A549 (cell line): ENCODE measurements at regions of chr11 and their contacts with region 1.

Region 1: DNA sequence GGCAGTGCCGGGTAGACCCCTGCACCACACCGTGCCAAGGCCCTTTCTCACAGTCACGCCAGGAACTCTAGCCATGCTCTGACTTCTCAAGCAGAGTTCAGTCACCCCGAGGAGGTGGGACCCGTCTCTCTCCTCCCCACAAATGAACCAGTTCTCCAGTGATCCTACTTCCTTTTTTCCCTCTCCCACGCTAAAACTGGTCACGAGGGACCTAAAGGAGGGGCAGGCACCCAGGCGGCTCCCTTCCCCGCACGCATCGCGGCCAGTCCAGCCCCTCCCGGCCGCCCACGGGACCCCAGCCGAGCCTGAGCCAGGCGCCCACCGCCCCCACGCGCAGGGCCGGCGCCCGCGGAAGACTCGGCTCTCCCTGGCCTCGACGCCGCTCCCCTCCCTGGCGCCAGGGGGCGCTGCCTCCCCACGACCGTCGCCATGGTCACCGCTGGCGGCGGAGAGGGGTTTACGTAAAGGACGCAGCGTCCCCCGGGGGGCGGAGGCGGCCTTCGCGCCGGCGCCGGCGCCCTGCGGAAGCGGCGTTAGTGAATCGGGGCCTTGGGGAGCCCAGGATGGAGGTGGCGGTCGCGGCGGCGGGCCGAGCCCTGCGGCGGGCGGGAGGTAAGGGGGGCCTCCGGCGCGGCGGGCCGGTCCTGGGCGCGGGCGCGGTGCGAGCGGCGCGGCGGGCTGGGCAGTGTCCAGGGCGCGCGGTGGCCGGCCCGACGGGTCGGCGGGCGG is at the start of gene DAGLA:
- DNase-seq: peak; percentile 66 to 68
- ATAC-seq: peak; percentile 62 to 81
- H3K4me3 ChIP-seq: peak within 1 kb of the TSS; percentile 61
- H3K27ac ChIP-seq: peak within 1 kb of the TSS; percentile 73 to 96
- H3K4me1 ChIP-seq: peaks cover 29% of the 10 kb centered on the region
- CTCF ChIP-seq: peak; percentile 93
- EP300 ChIP-seq: no peak
- POLR2A ChIP-seq: peak; percentile 26
- RAD21 ChIP-seq: peak; percentile 71 to 75
- polyA plus RNA-seq, gene DAGLA: 0.93 and 1.2 TPM in 2 replicates

Region 2: DNA sequence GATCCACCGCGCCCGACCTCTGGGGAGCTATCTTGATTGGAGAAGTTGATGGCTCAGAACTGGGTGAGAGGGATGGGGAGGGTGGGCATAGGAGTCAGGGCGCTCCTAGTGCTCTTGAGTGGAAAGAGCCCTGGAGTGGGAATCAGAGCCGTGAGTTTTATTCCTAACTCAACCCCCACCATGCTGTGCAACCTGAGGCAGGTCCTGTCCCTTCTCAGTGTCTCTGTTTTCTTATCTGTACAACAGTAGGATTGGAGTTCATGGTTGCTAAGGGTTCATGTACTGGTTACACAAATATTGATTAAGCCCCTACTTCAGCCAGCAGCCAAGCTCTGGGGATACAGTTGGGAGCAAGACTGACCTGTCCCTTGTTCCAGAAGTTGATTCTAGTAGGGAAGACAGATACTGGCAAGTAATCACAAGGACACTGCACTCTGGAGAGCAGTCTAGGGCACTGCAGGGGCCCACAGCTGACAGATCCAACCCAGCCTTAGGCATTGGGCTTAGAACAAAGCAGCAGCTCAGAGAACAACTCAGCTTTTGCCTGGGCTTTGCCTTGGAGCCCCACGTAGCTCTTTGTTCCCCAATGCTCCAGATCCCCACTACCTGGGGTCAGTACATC is 12.3 kb before region 1 on chr11:
- CTCF ChIA-PET with region 1: interaction called, 11 read pairs
- POLR2A ChIA-PET with region 1: no interaction called
- DNase-seq: no peak
- ATAC-seq: peak in 1 of 2 experiments; percentile 62; a peak in 3 of 6 replicates
- H3K4me3 ChIP-seq: no peak overlapping the region
- H3K27ac ChIP-seq: no peak overlapping the region
- H3K4me1 ChIP-seq: peaks cover 8% of the 10 kb centered on the region; the same call in 1 of the 3 replicates
- CTCF ChIP-seq: no peak
- EP300 ChIP-seq: no peak
- POLR2A ChIP-seq: no peak
- RAD21 ChIP-seq: no peak

Region 3: DNA sequence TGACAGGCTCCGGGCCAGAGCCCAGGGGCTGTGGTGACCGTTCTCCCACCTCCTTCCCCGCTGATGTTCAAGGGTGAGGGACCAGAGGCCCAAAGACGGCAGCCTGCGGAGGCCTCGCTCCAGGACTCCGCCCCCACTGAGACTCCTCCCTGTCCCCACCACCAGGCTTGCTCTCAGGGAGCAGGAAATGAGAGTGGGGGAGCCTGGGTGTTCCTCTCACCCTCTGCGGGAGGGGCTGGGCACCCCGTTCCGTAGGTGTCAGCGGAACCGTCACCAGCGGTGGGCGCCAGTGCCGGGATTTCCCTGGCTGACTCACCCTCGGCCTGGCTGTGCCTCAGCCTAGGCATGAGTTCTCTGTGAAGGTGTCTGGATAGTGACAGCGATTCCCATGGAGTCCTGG is 15.9 kb after region 1 on chr11:
- CTCF ChIA-PET with region 1: interaction called, 18 read pairs
- POLR2A ChIA-PET with region 1: no interaction called
- DNase-seq: peak; percentile 74 to 83
- ATAC-seq: peak; percentile 55 to 75
- H3K4me3 ChIP-seq: no peak overlapping the region; the same call in 2 of the 3 replicates
- H3K27ac ChIP-seq: peak overlapping the region; percentile 75 to 88
- H3K4me1 ChIP-seq: peaks cover 75% of the 10 kb centered on the region
- CTCF ChIP-seq: no peak
- EP300 ChIP-seq: no peak
- POLR2A ChIP-seq: no peak
- RAD21 ChIP-seq: no peak